ENCODE measurements at regions of chr5 and their contacts with region 1.

Region 1: GRCh38 chr5:68460147-68460798 is 244.7 kb downstream of the PIK3R1 start:
- DNase-seq: peak in 1 of 5 donors; percentile 44
- H3K4me3 ChIP-seq: no peak overlapping the region
- H3K27ac ChIP-seq: no peak overlapping the region
- H3K4me1 ChIP-seq: peaks cover 4% of the 10 kb centered on the region
- H3K27me3 ChIP-seq: no peaks in the 10 kb centered on the region
- CTCF ChIP-seq: peak in 2 of 3 donors; percentile 23 to 55
- EP300 ChIP-seq: no peak
- POLR2A ChIP-seq: no peak

Region 2: DNA sequence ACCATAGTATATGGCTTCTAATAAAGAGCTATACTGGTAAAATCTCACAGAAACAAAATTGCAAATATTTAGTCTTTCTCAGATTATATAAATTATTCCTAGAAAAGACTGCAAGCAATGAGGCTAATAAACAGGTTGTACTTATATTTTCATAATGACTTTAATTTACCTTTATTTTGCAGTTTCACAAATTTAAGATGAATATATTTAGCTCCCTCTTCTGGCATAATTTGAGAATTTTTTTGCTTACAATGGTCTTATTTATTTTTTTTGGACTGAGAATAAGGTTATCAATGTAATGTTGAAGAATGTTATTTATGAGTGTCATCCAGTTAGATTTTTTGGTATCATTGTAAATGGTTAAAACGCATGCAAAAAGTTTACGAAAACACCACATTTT is 188.0 kb before region 1 on chr5:
- intact Hi-C with region 1: loop called in 1 of 4 experiments (anchors 10 kb)
- DNase-seq: no peak
- H3K4me3 ChIP-seq: no peak overlapping the region
- H3K27ac ChIP-seq: no peak overlapping the region
- H3K4me1 ChIP-seq: peaks cover 6% of the 10 kb centered on the region
- H3K27me3 ChIP-seq: no peaks in the 10 kb centered on the region
- CTCF ChIP-seq: peak in 1 of 3 donors; percentile 28
- EP300 ChIP-seq: no peak
- POLR2A ChIP-seq: no peak

Region 3: DNA sequence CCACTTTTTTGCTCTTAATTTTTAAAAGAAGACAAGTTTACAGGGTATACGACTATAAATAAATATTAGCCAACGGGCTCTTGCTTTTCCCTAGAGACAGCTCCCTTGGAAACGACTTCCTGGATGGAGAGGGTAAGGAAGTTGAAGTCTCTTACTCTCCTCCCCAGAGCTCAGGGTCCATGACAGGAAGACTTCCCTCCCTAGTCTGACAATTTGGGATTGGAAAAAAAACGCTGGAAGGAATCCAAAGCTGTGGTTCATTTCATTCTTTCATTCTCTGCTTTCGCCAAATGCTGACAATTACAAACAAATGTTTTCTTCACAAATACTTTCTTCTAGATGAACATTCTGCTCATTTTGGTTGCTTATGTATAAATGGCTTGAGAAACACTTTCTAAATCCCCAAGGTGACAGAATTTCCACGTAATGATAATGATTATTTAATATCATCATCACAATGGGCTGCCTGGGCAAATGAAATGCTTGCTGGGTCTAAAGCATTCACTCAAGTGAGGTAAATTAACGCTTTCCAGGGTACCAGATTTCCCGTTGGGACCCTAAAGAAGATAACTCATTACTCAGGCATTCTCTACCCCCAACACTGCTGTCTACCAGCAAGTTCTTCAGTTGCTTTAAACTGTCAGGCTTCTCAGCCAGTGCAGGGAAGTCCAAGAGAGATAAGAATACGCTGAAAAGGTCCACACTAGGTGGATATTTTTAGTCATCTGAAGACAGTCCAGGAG is 493.8 kb after region 1 on chr5:
- intact Hi-C with region 1: loop called in 1 of 4 experiments (anchors 10 kb)
- DNase-seq: peak in 3 of 5 donors; percentile 30 to 51 (median 41)
- H3K4me3 ChIP-seq: no peak overlapping the region
- H3K27ac ChIP-seq: peak overlapping the region in 1 of 2 donors; percentile 60
- H3K4me1 ChIP-seq: peaks cover 9% of the 10 kb centered on the region
- H3K27me3 ChIP-seq: no peaks in the 10 kb centered on the region
- CTCF ChIP-seq: no peak
- EP300 ChIP-seq: no peak
- POLR2A ChIP-seq: no peak

Region 4: DNA sequence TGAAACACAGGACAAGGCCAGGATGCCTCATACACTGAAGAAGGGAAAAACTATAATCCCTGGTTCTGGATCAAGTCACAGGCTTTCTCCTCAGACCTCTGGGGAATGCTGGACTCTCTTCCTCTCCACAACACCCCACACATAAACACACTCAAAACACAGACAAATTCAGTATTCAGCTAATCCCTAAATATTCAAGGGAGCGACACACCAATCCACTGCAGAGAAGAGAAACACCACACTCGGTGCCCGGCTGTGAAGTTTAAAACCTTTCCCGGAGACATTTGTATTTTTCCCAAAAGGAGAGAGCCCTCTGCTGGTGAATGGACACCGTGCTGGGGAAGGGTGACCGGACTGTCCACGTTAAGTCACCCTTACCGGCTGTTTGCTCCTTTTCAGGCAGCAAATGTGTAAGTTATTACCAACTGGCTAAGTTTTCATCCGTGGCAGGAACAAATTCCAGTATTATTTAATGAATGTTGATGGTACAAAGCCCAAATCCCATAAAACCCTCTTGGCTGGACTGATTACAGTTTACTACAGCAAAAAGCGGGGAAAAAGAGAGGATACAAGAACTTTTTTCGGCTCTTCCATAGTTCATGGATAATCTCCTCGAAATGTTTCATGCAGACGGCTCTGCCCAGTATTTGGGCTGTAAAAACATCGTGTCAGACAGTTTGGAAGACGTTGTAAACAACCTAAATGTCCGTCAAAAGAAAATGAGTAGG is 502.6 kb after region 1 on chr5:
- intact Hi-C with region 1: loop called in 2 of 4 experiments (anchors 10 kb)
- DNase-seq: peak; percentile 62 to 79 (median 71)
- H3K4me3 ChIP-seq: no peak overlapping the region
- H3K27ac ChIP-seq: peak overlapping the region in 1 of 2 donors; percentile 40
- H3K4me1 ChIP-seq: no peaks in the 10 kb centered on the region
- H3K27me3 ChIP-seq: no peaks in the 10 kb centered on the region
- CTCF ChIP-seq: peak; percentile 44 to 78 (median 77)
- EP300 ChIP-seq: no peak
- POLR2A ChIP-seq: no peak

Measured in ovary (tissue), 10 donors.